ENCODE measurements at regions of chr4 and their contacts with region 1.

Region 1: GRCh38 chr4:76377911-76378310 is 43.0 kb downstream of the CCDC158 start:
- DNase-seq: peak in 4 of 5 donors; percentile 24 to 49 (median 32)
- H3K4me3 ChIP-seq: no peak overlapping the region
- H3K4me3 Mint-ChIP-seq: no peak overlapping the region
- H3K27ac ChIP-seq: no peak overlapping the region
- H3K27ac Mint-ChIP-seq: no peak overlapping the region
- H3K4me1 ChIP-seq: no peaks in the 10 kb centered on the region
- H3K4me1 Mint-ChIP-seq: peaks cover 0 to 2% (median under 1%) of the 10 kb centered on the region in 4 donors
- H3K27me3 ChIP-seq: no peaks in the 10 kb centered on the region
- H3K27me3 Mint-ChIP-seq: peaks cover 0 to 9% of the 10 kb centered on the region in 2 donors

Region 2: GRCh38 chr4:76257824-76258223 is 120.1 kb before region 1 on chr4:
- CTCF ChIA-PET with region 1: interaction called, 78 read pairs
- POLR2A ChIA-PET with region 1: no interaction called
- intact Hi-C with region 1: no loop called
- DNase-seq: no peak
- H3K4me3 ChIP-seq: no peak overlapping the region
- H3K4me3 Mint-ChIP-seq: no peak overlapping the region
- H3K27ac ChIP-seq: no peak overlapping the region
- H3K27ac Mint-ChIP-seq: no peak overlapping the region
- H3K4me1 ChIP-seq: no peaks in the 10 kb centered on the region
- H3K4me1 Mint-ChIP-seq: no peaks in the 10 kb centered on the region
- H3K27me3 ChIP-seq: peaks cover 16% of the 10 kb centered on the region
- H3K27me3 Mint-ChIP-seq: peaks cover 20 to 23% of the 10 kb centered on the region in 2 donors

Region 3: DNA sequence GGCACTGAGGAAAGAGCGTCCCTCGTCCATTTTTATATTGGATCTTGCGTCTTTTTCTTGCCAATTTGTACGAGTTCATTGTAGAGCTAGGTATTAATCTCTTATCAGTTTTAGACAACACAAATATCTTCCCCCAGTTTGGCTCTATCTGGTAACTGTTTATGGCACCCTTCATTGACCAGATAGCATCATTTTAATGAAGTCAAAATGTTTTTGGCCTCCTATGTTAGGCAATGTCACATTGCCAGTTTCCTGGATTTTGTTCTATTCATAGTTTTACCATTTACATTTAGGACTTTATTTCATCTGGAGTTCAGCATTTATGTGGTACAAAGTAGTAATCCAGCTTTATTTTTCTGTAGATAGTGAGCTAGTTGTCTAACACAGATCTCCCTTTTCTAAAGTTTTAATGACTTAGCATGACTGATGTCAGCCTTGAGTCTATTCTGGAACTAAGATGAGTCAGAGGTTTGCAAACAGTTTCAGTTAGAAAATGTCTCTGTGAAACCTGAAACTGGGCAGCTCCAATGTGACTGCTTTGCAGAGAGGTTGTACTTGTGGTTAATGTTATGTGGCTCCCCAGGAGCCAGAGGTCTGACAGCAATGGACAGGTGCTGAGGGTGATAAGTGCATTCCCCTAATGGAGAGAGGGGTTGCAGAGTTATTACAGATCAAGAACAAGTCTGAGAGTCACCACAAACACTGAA is 76.7 kb before region 1 on chr4:
- CTCF ChIA-PET with region 1: interaction called, 66 read pairs
- POLR2A ChIA-PET with region 1: no interaction called
- intact Hi-C with region 1: loop called (anchors 10 kb)
- DNase-seq: no peak
- H3K4me3 ChIP-seq: no peak overlapping the region
- H3K4me3 Mint-ChIP-seq: no peak overlapping the region
- H3K27ac ChIP-seq: no peak overlapping the region
- H3K27ac Mint-ChIP-seq: no peak overlapping the region
- H3K4me1 ChIP-seq: peaks cover 27% of the 10 kb centered on the region
- H3K4me1 Mint-ChIP-seq: peaks cover 27 to 55% (median 40%) of the 10 kb centered on the region in 4 donors
- H3K27me3 ChIP-seq: no peaks in the 10 kb centered on the region
- H3K27me3 Mint-ChIP-seq: no peaks in the 10 kb centered on the region

Region 4: DNA sequence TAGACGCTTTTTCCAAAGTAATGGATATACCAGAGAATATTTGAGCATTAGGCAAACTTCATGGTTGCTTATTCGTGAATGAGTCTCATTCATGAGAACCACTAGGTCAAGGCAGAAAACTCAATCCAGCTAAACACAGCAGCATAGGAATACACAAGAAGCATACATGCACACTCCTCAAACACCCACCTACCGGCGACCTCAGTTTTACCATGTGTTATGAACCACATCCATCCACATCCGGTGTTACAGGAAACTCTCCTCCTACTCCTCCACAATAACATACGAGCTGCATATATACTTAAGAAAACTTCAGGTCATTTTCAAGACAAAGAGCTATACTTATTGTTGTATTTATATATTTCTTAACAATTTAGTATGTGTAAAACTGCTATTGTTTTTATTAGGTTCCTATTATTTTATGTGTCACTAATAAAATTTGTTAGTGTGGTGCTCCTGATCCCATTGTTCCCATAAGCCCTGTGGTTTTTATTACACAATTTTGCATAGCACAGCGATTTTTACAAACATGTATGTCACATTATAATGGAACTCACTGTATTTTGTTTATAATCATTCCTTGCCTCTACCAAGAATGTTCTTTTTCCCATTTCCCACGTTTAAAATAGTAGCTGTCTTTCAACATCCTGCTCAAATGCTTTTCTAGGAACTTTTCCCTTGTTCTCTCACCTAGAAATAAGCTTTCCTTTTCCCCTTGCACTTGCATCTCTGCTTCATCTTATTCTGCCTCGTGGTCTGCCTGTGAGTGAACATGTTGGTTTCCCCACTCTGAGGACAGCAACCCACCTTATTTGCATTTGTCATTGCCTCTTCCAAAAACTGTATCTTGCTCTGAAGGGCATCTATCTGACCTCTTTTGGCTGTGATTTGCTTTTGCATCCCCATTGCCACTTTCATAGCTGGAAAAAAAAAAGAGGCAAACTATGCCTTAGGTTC is 23.1 kb before region 1 on chr4:
- CTCF ChIA-PET with region 1: interaction called, 32 read pairs
- POLR2A ChIA-PET with region 1: no interaction called
- intact Hi-C with region 1: no loop called
- DNase-seq: peak in 4 of 5 donors; percentile 17 to 35 (median 26)
- H3K4me3 ChIP-seq: no peak overlapping the region
- H3K4me3 Mint-ChIP-seq: peak overlapping the region in 7 of 8 donors; percentile 7 to 77 (median 72)
- H3K27ac ChIP-seq: no peak overlapping the region
- H3K27ac Mint-ChIP-seq: peak overlapping the region in 3 of 7 donors; percentile 0 to 42 (median 2)
- H3K4me1 ChIP-seq: peaks cover 17% of the 10 kb centered on the region
- H3K4me1 Mint-ChIP-seq: peaks cover 9 to 17% (median 13%) of the 10 kb centered on the region in 4 donors
- H3K27me3 ChIP-seq: no peaks in the 10 kb centered on the region
- H3K27me3 Mint-ChIP-seq: peaks cover 2 to 4% of the 10 kb centered on the region in 2 donors

Region 5: GRCh38 chr4:76388160-76388908 is 10.4 kb after region 1 on chr4:
- CTCF ChIA-PET with region 1: interaction called, 11 read pairs
- POLR2A ChIA-PET with region 1: no interaction called
- intact Hi-C with region 1: no loop called
- DNase-seq: no peak
- H3K4me3 ChIP-seq: no peak overlapping the region
- H3K4me3 Mint-ChIP-seq: no peak overlapping the region
- H3K27ac ChIP-seq: no peak overlapping the region
- H3K27ac Mint-ChIP-seq: no peak overlapping the region
- H3K4me1 ChIP-seq: no peaks in the 10 kb centered on the region
- H3K4me1 Mint-ChIP-seq: no peaks in the 10 kb centered on the region
- H3K27me3 ChIP-seq: no peaks in the 10 kb centered on the region
- H3K27me3 Mint-ChIP-seq: peaks cover 19 to 22% of the 10 kb centered on the region in 2 donors

Region 6: DNA sequence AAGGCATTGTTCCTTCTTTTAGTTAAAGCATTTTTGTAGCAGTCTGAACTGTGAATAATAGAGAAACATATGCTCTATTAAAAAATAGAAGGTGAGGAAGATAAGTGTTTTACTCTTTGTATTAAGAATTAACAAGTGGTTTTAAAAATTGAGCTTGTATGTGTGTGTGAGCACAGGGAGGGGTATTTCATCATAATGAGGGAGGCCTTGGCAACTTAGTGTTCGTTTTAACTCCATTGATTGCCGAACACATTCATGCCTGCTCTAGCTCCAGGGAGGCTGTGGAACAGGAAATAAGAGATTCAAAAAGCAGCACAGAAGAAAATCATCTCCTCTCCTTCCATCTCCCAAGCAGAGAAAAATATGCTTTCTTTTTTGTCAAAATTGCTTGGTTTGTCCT is 71.9 kb after region 1 on chr4:
- CTCF ChIA-PET with region 1: no interaction called
- POLR2A ChIA-PET with region 1: no interaction called
- intact Hi-C with region 1: no loop called
- DNase-seq: no peak
- H3K4me3 ChIP-seq: no peak overlapping the region
- H3K4me3 Mint-ChIP-seq: no peak overlapping the region
- H3K27ac ChIP-seq: no peak overlapping the region
- H3K27ac Mint-ChIP-seq: no peak overlapping the region
- H3K4me1 ChIP-seq: no peaks in the 10 kb centered on the region
- H3K4me1 Mint-ChIP-seq: no peaks in the 10 kb centered on the region
- H3K27me3 ChIP-seq: no peaks in the 10 kb centered on the region
- H3K27me3 Mint-ChIP-seq: peaks cover 6 to 7% of the 10 kb centered on the region in 2 donors

Measured in CD4-positive, alpha-beta memory T cell (primary cell).